Pancreas (tissue), 10 donors: ENCODE measurements at regions of chr2 and their contacts with region 1.

Region 1: GRCh38 chr2:181891258-181891965 is at the start of gene ITPRID2:
- DNase-seq: peak; percentile 88 to 94 (median 91)
- ATAC-seq: peak; percentile 72 to 90 (median 88)
- H3K4me3 ChIP-seq: peak within 1 kb of the TSS; percentile 70 to 80 (median 78)
- H3K27ac ChIP-seq: peak within 1 kb of the TSS; percentile 94 to 100 (median 98)
- H3K4me1 ChIP-seq: peaks cover 16 to 19% (median 18%) of the 10 kb centered on the region in 3 donors
- H3K27me3 ChIP-seq: no peaks in the 10 kb centered on the region
- CTCF ChIP-seq: no peak
- total RNA-seq, gene ITPRID2: 304 to 497 (median 336) TPM

Region 2: DNA sequence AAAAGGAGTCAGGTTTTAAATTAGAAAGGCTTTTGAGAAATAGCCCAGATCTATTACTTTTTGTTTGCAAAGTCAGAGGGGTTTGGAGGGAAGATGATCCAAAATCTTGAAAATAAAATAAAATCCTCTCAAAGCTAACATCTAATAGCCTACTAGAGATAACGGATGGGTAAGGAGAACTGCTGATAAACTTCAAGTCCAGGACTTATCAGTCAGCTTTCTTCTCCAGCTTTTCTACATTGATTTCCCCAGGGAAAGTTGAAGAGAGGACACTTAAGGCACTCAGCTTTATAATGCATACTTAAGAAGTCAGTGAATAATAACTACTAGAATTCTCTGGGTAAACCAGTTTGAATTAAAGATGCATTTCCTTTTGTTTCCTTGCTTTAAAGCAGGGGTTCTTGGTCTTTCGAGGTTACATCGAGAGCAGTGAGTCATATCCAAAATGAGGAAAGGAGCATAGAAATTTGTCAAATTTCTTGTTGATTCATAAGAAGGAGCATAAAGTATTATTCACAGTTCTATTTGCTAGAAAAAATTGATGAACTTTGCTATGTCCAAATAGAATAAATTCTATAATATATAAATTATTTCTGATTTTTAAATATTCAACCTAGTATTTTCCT is 43.0 kb before region 1 on chr2:
- intact Hi-C with region 1: loop called in 1 of 3 experiments (anchors 10 kb)
- DNase-seq: no peak
- ATAC-seq: peak in 2 of 4 donors; percentile 9 to 17
- H3K4me3 ChIP-seq: no peak overlapping the region
- H3K27ac ChIP-seq: peak overlapping the region in 3 of 4 donors; percentile 10 to 65 (median 44)
- H3K4me1 ChIP-seq: peaks cover 33 to 60% (median 57%) of the 10 kb centered on the region in 3 donors
- H3K27me3 ChIP-seq: no peaks in the 10 kb centered on the region
- CTCF ChIP-seq: no peak